Sciatic nerve (tissue), 2 donors: ENCODE measurements at regions of chr7 and their contacts with region 1.

Region 1: DNA sequence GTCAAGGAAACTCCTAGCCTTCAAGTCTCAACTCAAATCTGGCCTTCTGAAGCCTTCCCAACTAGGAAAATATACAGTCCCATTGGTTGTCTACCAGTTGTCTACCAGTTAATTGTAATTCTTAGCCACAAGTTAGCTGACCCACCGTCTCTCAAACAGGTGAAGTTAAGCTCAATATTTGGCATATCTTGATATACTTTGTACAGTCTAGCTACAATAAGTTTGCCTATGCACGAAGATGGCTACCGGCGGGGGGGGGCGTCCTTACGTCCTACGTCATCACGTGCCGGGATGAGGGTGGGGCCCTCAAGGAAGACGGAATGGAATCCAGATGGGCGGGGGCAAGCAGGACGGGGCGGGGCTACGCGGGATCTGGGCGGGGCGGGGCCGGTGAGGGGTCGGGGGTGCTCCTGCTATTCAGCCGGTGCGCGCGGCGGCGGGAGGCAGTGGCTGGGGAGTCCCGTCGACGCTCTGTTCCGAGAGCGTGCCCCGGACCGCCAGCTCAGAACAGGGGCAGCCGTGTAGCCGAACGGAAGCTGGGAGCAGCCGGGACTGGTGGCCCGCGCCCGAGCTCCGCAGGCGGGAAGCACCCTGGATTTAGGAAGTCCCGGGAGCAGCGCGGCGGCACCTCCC is at the start of gene AHR:
- DNase-seq: peak; percentile 96
- ATAC-seq: peak; percentile 96
- total RNA-seq, gene AHR: 288 TPM

Region 2: DNA sequence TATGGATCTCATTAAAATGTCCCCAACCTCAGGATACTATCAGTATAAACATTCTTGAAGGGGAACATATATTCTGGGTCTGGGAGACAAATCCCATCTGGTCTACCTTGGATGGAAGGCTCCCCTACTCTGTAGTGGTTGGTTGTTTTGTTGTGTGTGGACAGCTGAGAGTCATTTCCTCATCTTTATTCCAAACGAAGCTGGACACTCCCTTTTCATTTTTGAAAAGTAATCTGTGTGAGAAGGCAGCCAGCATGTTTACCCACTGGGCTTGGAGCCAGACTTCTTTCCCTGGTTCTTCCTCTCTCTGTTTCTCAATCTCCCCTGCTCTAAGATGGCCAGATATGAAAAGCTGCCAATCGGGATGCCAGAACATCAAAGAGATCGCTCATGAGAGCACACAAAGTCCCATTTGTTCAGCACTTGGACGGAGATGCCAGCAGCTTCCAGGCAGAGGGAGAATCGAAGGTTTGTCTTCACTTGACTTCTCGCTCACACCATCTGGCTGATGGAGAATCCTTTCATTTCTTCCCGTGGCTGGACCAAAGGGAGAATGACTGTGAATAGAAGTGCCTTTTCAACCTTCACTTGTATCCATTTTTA is 308.4 kb before region 1 on chr7:
- intact Hi-C with region 1: loop called (anchors 5 kb)
- DNase-seq: peak; percentile 81
- ATAC-seq: peak; percentile 96

Region 3: GRCh38 chr7:17247357-17247756 is 51.0 kb before region 1 on chr7:
- intact Hi-C with region 1: no loop called
- DNase-seq: no peak
- ATAC-seq: no peak

Region 4: GRCh38 chr7:17492437-17492836 is 194.1 kb after region 1 on chr7:
- intact Hi-C with region 1: no loop called
- DNase-seq: no peak
- ATAC-seq: no peak